Gastrocnemius medialis (tissue), 4 donors: ENCODE measurements at regions of chr22 and their contacts with region 1.

Region 1: DNA sequence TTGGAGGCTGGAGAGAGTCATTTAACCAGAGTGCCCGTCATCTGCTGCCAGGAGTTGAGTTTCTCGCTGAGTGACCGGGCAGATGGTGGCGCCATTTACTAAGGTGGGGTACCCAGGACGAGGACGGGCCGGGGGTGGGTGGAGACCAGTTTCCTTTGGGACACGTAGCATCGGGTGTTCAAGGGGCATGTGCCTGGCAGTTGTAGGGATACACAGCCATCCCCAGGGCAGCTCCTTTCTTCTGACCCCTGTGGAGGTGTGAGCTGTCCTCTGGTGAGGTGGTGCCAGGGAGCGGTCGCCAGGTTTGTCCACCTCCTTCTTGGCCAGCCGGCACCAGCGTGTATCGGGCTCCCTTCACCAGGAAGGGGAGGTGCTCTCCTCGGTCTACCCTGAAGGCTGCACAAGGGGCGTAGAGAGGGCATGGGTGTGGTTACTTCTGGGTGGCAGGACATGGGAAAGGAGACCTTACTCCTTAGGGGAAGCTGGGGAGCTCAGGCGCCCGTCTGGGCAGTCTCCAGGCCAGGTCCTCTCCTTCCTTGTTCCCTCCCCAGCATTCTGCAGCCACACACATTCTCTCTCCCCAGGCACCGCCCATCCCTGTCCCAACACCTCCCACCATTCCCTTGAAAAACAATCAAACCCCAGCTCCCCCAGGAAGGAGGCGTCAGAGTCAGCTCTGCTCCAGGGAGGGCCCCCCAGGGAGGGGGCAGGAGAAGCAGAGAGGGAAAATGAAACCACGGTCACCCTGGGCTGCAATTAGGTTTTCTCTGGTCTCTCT is 10.3 kb upstream of the MB start:
- DNase-seq: peak in 1 of 2 donors; percentile 81
- ATAC-seq: peak; percentile 22 to 35
- H3K4me3 ChIP-seq: peak overlapping the region; percentile 45 to 62 (median 59)
- H3K27ac ChIP-seq: peak overlapping the region; percentile 62 to 76 (median 68)
- H3K4me1 ChIP-seq: peaks cover 12 to 24% of the 10 kb centered on the region in 2 donors
- H3K27me3 ChIP-seq: no peaks in the 10 kb centered on the region
- CTCF ChIP-seq: peak; percentile 23 to 74 (median 46)
- POLR2A ChIP-seq: no peak

Region 2: GRCh38 chr22:35539910-35540594 is 87.4 kb before region 1 on chr22:
- in situ Hi-C with region 1: no loop called
- intact Hi-C with region 1: loop called (anchors 1 kb)
- DNase-seq: peak; percentile 46 to 69
- ATAC-seq: peak; percentile 63
- H3K4me3 ChIP-seq: peak overlapping the region; percentile 72 to 78 (median 74)
- H3K27ac ChIP-seq: peak overlapping the region; percentile 85 to 96 (median 90)
- H3K4me1 ChIP-seq: peaks cover 32 to 34% of the 10 kb centered on the region in 2 donors
- H3K27me3 ChIP-seq: no peaks in the 10 kb centered on the region
- CTCF ChIP-seq: peak in 2 of 5 experiments; percentile 5 to 23
- POLR2A ChIP-seq: peak; percentile 62 to 77

Region 3: GRCh38 chr22:35601743-35602630 is 25.5 kb before region 1 on chr22:
- in situ Hi-C with region 1: no loop called
- intact Hi-C with region 1: no loop called
- DNase-seq: peak; percentile 88 to 94
- ATAC-seq: peak; percentile 68 to 94
- H3K4me3 ChIP-seq: no peak overlapping the region
- H3K27ac ChIP-seq: peak overlapping the region; percentile 92 to 97 (median 97)
- H3K4me1 ChIP-seq: peaks cover 48 to 50% of the 10 kb centered on the region in 2 donors
- H3K27me3 ChIP-seq: no peaks in the 10 kb centered on the region
- CTCF ChIP-seq: no peak
- POLR2A ChIP-seq: peak in 1 of 2 donors; percentile 37

Region 4: DNA sequence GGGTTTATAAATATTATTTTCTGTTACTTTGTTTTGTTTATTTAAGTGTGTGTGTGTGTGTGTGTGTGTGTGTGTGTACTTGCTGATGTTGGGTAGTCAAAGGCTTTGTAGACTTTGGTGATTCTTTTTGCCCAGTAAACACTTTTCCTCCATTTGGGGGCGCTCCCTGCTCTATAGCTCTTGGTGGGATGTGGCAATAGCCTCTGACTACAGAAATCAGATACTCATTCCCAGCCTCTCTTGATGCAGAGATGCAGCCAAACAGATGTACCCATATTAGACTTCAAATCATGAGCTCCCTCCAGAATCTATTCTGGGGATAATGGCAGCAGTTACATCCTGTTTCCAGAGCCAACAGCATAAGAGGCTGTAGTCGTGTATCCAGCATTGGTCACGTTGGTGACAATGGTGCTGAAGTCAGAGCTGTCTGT is 56.8 kb after region 1 on chr22:
- in situ Hi-C with region 1: no loop called
- intact Hi-C with region 1: loop called (anchors 5 kb)
- DNase-seq: peak; percentile 71 to 81
- ATAC-seq: peak; percentile 93 to 97
- H3K4me3 ChIP-seq: no peak overlapping the region
- H3K27ac ChIP-seq: peak overlapping the region; percentile 74 to 94 (median 90)
- H3K4me1 ChIP-seq: peaks cover 28 to 31% of the 10 kb centered on the region in 2 donors
- H3K27me3 ChIP-seq: no peaks in the 10 kb centered on the region
- CTCF ChIP-seq: peak in 4 of 5 experiments; percentile 40 to 53 (median 49)
- POLR2A ChIP-seq: no peak

Region 5: DNA sequence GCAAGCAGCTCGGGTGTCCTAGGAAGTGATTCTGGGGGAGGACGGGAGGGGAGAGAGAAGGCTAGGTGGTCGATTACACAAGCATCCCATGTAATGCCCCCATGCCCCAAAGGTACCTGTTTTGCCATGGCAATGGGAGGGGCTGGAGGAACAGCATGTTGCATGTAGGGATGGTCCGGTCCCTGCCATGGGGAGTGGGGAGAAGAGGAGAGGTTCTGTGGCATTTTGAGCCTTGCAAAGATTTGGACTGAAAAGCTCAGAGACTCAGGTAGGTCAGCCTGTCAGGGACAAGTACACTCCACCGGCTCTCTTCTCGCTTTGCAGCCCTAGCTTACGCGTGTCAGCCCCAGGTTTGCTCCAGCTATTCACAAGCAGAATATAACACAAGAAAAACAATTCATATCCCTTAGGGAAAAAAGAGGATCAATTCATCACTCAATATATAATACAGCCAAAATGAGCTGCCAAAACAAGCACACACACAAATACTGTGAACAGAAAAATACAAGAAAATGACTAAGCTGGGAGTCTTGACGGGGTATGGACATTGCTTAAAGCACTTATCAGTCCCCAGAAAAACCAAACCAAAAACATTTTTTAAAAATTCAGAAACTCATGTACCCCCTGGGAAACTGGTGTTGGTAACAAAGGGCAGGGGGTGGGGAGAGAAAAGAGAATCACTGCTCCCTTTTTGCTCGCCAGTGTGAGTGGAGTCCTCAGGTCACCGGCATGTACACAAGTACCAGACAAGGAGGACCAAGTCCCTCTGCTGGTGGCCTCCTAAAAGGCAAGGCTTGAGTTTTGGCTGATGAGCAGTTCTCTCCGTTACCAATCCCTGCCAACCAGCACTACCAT is 111.8 kb after region 1 on chr22:
- in situ Hi-C with region 1: loop called in 1 of 4 experiments (anchors 10 kb)
- intact Hi-C with region 1: loop called (anchors 5 kb)
- DNase-seq: peak in 1 of 2 donors; percentile 48
- ATAC-seq: peak; percentile 28 to 35
- H3K4me3 ChIP-seq: no peak overlapping the region
- H3K27ac ChIP-seq: peak overlapping the region; percentile 46 to 87 (median 82)
- H3K4me1 ChIP-seq: peaks cover 45 to 46% of the 10 kb centered on the region in 2 donors
- H3K27me3 ChIP-seq: no peaks in the 10 kb centered on the region
- CTCF ChIP-seq: peak in 4 of 5 experiments; percentile 22 to 62 (median 42)
- POLR2A ChIP-seq: no peak

Region 6: DNA sequence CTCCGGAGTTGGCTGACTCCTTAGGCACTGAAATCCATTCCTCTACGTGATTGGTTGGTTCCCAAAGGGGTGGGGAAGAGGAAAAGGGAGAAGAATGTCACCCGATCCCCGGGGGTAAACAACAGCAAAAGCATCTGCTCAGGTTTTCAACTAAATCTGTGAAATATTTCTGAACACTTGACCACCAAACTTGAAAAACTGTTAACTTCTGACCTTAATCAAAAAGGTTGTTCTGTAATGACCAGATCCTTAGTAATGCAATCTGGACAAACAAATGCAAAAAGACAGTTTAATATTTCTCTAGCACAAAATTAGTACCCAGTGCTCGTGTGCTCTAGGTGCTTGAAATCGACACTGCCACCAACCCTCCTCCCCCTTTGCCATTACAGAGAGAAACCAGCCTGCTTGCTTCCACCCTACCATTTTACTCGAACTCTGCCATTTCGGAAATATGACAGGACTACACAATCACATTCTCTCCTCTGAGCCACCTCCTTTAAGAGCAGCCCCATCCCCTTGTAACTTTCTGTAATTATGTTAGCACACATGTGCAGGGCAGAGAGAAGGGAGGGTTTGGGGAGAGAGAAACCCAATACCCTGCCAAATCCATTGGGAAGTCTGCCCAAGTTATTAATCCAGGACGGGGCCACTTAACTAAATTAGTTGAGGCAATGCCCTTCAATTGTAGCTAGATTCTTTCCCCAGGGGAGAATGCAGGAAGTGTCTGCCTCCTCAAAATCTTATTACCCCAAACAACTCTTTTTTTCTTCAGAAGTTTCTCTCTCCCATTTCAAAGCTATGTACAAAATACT is 287.4 kb after region 1 on chr22:
- in situ Hi-C with region 1: loop called in 2 of 4 experiments (anchors 5 to 25 kb)
- intact Hi-C with region 1: no loop called
- DNase-seq: peak; percentile 82 to 83
- ATAC-seq: peak; percentile 94 to 97
- H3K4me3 ChIP-seq: peak overlapping the region; percentile 49 to 57 (median 54)
- H3K27ac ChIP-seq: peak overlapping the region; percentile 84 to 91 (median 88)
- H3K4me1 ChIP-seq: peaks cover 79 to 83% of the 10 kb centered on the region in 2 donors
- H3K27me3 ChIP-seq: no peaks in the 10 kb centered on the region
- CTCF ChIP-seq: no peak
- POLR2A ChIP-seq: peak in 1 of 2 donors; percentile 31

Region 7: DNA sequence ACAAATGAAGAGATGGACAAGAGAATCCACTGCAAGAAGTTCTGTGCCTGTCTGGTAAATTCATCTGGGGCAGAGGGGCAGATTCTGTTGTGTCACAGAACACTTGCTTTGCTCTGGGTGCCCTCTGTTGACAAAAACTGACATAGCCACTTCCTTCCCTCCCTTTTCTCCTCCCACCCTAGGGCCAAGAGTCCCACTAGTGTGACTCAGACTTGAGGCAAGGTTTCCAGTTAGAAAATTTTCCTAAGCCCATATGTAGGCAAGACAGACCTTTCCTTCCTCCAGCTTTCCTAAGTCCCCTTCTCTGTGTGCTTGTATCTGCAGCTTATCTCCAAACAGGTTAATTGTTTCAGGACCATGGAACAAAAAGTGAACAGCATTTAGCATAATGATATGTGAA is 294.3 kb after region 1 on chr22:
- in situ Hi-C with region 1: loop called in 2 of 4 experiments (anchors 5 to 25 kb)
- intact Hi-C with region 1: loop called (anchors 1 kb)
- DNase-seq: peak; percentile 50 to 82
- ATAC-seq: peak; percentile 93 to 99
- H3K4me3 ChIP-seq: no peak overlapping the region
- H3K27ac ChIP-seq: peak overlapping the region; percentile 55 to 79 (median 62)
- H3K4me1 ChIP-seq: peaks cover 37 to 49% of the 10 kb centered on the region in 2 donors
- H3K27me3 ChIP-seq: no peaks in the 10 kb centered on the region
- CTCF ChIP-seq: peak; percentile 40 to 79 (median 66)
- POLR2A ChIP-seq: no peak

Region 8: DNA sequence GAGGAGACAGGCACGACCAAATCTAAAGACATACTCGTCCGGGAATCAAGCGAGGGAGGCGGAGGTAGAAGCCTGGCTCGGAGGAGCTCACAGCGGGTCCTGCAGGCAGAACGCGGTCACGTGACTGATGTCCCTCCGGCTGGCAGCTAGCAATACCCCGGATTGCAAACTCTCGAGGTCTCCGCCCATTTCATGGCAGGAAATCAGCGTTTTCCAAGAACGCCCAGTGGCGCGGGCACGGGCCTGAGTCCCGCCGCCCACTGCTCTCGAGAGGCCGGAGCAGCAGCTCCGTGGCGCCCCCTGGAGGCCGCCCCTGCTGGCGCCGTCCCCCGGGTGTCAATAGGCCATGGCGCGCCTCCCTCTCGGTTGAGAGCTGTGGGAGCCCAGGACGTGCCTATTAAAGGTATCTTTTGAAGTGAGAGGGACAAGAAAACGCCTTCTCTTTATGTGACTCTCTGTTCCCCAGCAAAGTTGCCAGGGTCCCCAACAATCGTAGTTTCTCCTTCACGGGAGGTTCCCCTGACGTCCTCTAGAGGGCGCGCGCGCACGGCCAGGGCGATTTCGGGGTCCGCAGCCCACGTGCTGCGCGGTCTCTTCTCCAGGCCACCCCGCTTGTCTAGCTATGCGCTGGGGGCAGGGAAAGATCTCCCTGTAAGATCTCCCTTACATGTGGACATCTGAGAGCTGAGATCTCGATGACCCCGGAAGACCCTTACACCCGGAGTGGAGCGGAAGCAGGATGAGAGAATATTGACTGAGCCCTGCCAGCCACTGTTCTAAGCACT is 438.5 kb after region 1 on chr22:
- in situ Hi-C with region 1: no loop called
- intact Hi-C with region 1: loop called (anchors 5 kb)
- DNase-seq: peak; percentile 61 to 85
- ATAC-seq: peak; percentile 89 to 93
- H3K4me3 ChIP-seq: peak overlapping the region; percentile 60 to 71 (median 63)
- H3K27ac ChIP-seq: peak overlapping the region; percentile 76 to 82 (median 79)
- H3K4me1 ChIP-seq: peaks cover 0 to 5% of the 10 kb centered on the region in 2 donors
- H3K27me3 ChIP-seq: no peaks in the 10 kb centered on the region
- CTCF ChIP-seq: peak; percentile 99 to 100 (median 100)
- POLR2A ChIP-seq: no peak